ENCODE measurements at regions of chr3 and their contacts with region 1.

Region 1: GRCh38 chr3:152127058-152127457 is 141.7 kb upstream of the MBNL1 start:
- DNase-seq: peak; percentile 85
- ATAC-seq: peak; percentile 98
- H3K4me3 ChIP-seq: no peak overlapping the region
- H3K27ac ChIP-seq: no peak overlapping the region
- H3K4me1 ChIP-seq: peaks cover 16% of the 10 kb centered on the region
- H3K27me3 ChIP-seq: no peaks in the 10 kb centered on the region
- CTCF ChIP-seq: no peak
- EP300 ChIP-seq: peak; percentile 77 to 83; a peak in 3 of 4 replicates
- POLR2A ChIP-seq: no peak
- RAD21 ChIP-seq: peak; percentile 12; the same call in 1 of the 2 replicates

Region 2: GRCh38 chr3:151918253-151919029 is 208.6 kb before region 1 on chr3:
- CTCF ChIA-PET with region 1: no interaction called
- POLR2A ChIA-PET with region 1: no interaction called
- RAD21 ChIA-PET with region 1: no interaction called
- SMC1A ChIA-PET with region 1: no interaction called
- in situ Hi-C with region 1: no loop called
- intact Hi-C with region 1: no loop called
- DNase-seq: peak; percentile 16
- ATAC-seq: peak; percentile 89
- H3K4me3 ChIP-seq: no peak overlapping the region
- H3K27ac ChIP-seq: no peak overlapping the region
- H3K4me1 ChIP-seq: no peaks in the 10 kb centered on the region
- H3K27me3 ChIP-seq: no peaks in the 10 kb centered on the region
- CTCF ChIP-seq: peak; percentile 44 to 74 (median 55); a peak in 5 of 6 replicates
- EP300 ChIP-seq: no peak
- POLR2A ChIP-seq: no peak
- RAD21 ChIP-seq: peak; percentile 86

Region 3: DNA sequence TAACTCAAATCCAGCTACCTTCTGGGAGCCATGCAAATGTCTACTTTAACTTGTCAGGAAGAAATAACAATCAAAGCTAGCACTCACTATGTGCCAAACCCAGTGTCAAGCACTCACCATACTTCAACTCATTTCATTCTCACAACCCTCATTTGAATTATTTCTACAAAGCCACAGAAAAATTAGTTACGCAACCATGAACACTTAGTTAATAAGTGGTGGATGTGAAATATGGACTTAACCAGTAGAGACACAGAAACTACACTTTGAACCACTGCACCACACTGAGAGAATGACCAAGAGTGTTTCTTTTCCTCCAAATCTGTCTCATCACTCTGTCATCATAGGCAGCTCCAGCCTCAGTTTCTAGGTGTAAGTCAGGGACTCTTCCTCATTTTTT is 50.7 kb after region 1 on chr3:
- CTCF ChIA-PET with region 1: interaction called, 3 read pairs
- POLR2A ChIA-PET with region 1: no interaction called
- RAD21 ChIA-PET with region 1: no interaction called
- SMC1A ChIA-PET with region 1: interaction called, 4 read pairs
- in situ Hi-C with region 1: no loop called
- intact Hi-C with region 1: loop called (anchors 5 kb)
- DNase-seq: no peak
- ATAC-seq: peak; percentile 97
- H3K4me3 ChIP-seq: no peak overlapping the region
- H3K27ac ChIP-seq: no peak overlapping the region
- H3K4me1 ChIP-seq: no peaks in the 10 kb centered on the region
- H3K27me3 ChIP-seq: no peaks in the 10 kb centered on the region
- CTCF ChIP-seq: no peak
- EP300 ChIP-seq: no peak
- POLR2A ChIP-seq: no peak
- RAD21 ChIP-seq: no peak

Region 4: GRCh38 chr3:152737021-152737908 is 610.2 kb after region 1 on chr3:
- CTCF ChIA-PET with region 1: no interaction called
- POLR2A ChIA-PET with region 1: no interaction called
- RAD21 ChIA-PET with region 1: no interaction called
- SMC1A ChIA-PET with region 1: no interaction called
- in situ Hi-C with region 1: no loop called
- intact Hi-C with region 1: no loop called
- DNase-seq: peak; percentile 96
- ATAC-seq: peak; percentile 99
- H3K4me3 ChIP-seq: no peak overlapping the region
- H3K27ac ChIP-seq: peak overlapping the region; percentile 45; the same call in 1 of the 2 replicates
- H3K4me1 ChIP-seq: peaks cover 20% of the 10 kb centered on the region
- H3K27me3 ChIP-seq: no peaks in the 10 kb centered on the region
- CTCF ChIP-seq: no peak
- EP300 ChIP-seq: peak; percentile 84 to 89
- POLR2A ChIP-seq: no peak
- RAD21 ChIP-seq: 0 out of 2 replicates have a peak, but pooled peaks have one; percentile 1